Activated CD4-positive, alpha-beta T cell treated with anti-CD3 and anti-CD28 coated beads for 36 hours (primary cell): ENCODE measurements at regions of chr9 and their contacts with region 1.

Region 1: GRCh38 chr9:134067904-134068743 is at the start of gene BRD3:
- DNase-seq: peak; percentile 91
- ATAC-seq: peak; percentile 85
- H3K4me3 Mint-ChIP-seq: peak within 1 kb of the TSS; percentile 85
- H3K27ac Mint-ChIP-seq: peak within 1 kb of the TSS; percentile 84
- H3K4me1 Mint-ChIP-seq: peaks cover 28% of the 10 kb centered on the region
- H3K27me3 Mint-ChIP-seq: peaks cover 14% of the 10 kb centered on the region
- total RNA-seq, gene BRD3: 33.8 to 39.2 TPM

Region 2: GRCh38 chr9:133121198-133121939 is 946.8 kb before region 1 on chr9 and contains the start of gene RALGDS:
- CTCF ChIA-PET with region 1: no interaction called
- POLR2A ChIA-PET with region 1: no interaction called
- intact Hi-C with region 1: loop called in 1 of 2 experiments (anchors 1 kb)
- DNase-seq: peak; percentile 96
- ATAC-seq: peak; percentile 82
- H3K4me3 Mint-ChIP-seq: peak within 1 kb of the TSS; percentile 71
- H3K27ac Mint-ChIP-seq: peak within 1 kb of the TSS; percentile 80
- H3K4me1 Mint-ChIP-seq: peaks cover 58% of the 10 kb centered on the region
- H3K27me3 Mint-ChIP-seq: no peaks in the 10 kb centered on the region
- total RNA-seq, gene RALGDS: 65.1 to 78.6 TPM

Region 3: GRCh38 chr9:133459476-133460404 is 608.4 kb before region 1 on chr9 and contains the start of gene CACFD1:
- CTCF ChIA-PET with region 1: no interaction called
- POLR2A ChIA-PET with region 1: no interaction called
- intact Hi-C with region 1: loop called in 1 of 2 experiments (anchors 5 kb)
- DNase-seq: peak; percentile 96
- ATAC-seq: peak; percentile 88
- H3K4me3 Mint-ChIP-seq: peak within 1 kb of the TSS; percentile 74
- H3K27ac Mint-ChIP-seq: peak within 1 kb of the TSS; percentile 42
- H3K4me1 Mint-ChIP-seq: no peaks in the 10 kb centered on the region
- H3K27me3 Mint-ChIP-seq: no peaks in the 10 kb centered on the region
- total RNA-seq, gene CACFD1: 0.87 to 0.90 TPM

Region 4: GRCh38 chr9:134024828-134025605 is 43.1 kb before region 1 on chr9 and contains the start of gene BRD3OS:
- CTCF ChIA-PET with region 1: interaction called, 3 read pairs
- POLR2A ChIA-PET with region 1: interaction called, 5 read pairs
- intact Hi-C with region 1: loop called (anchors 1 kb)
- DNase-seq: peak; percentile 96
- ATAC-seq: peak; percentile 91
- H3K4me3 Mint-ChIP-seq: peak within 1 kb of the TSS; percentile 74
- H3K27ac Mint-ChIP-seq: no peak within 1 kb of the TSS
- H3K4me1 Mint-ChIP-seq: peaks cover 4% of the 10 kb centered on the region
- H3K27me3 Mint-ChIP-seq: no peaks in the 10 kb centered on the region
- total RNA-seq, gene BRD3OS: 15.1 to 18.0 TPM

Region 5: GRCh38 chr9:134325817-134326723 is 257.9 kb after region 1 on chr9 and contains the start of gene RXRA:
- CTCF ChIA-PET with region 1: no interaction called
- POLR2A ChIA-PET with region 1: no interaction called
- intact Hi-C with region 1: loop called (anchors 1 to 5 kb)
- DNase-seq: peak; percentile 68
- ATAC-seq: peak; percentile 48
- H3K4me3 Mint-ChIP-seq: peak within 1 kb of the TSS; percentile 55
- H3K27ac Mint-ChIP-seq: no peak within 1 kb of the TSS
- H3K4me1 Mint-ChIP-seq: peaks cover 3% of the 10 kb centered on the region
- H3K27me3 Mint-ChIP-seq: peaks cover 5% of the 10 kb centered on the region
- total RNA-seq, gene RXRA: 17.6 to 20.9 TPM

Region 6: DNA sequence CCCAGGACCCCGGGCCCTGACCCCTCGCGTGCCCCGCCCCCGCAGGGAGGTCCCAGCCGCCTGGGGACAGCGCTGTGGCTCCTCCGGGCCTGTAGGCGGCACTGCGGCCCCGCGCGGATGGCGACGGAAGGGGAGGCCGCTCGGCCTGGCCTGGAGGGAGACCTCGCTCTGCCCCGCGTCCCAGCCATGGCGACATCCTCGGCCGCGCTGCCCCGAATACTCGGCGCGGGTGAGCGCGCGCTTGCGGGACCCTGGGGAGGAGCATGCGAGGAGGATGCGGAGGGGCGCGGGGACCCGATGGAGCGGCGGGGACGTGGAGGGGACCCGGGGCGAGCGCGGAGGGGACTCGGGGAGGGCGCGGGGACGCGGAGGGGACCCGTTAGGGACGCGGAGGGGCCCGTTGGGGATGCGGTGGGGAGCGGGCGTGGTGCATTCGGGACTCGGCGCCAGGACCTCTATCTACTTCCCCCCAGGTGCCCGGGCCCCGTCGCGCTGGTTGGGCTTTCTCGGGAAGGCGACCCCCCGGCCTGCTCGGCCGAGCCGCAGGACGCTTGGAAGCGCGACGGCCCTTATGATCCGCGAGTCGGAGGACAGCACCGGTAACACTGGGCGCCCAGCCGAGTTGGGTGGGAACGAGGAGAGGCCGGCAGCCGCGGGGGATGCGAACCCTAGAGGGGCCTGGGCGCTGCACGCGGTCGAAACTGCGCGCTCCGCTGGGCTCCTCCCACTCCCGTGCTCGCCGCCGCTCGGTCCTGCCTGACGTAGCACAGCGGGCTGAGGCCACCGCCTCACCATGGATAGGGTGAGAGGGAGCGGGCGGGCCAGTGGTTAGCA is 1432.6 kb after region 1 on chr9 and contains the start of gene MRPS2:
- CTCF ChIA-PET with region 1: no interaction called
- POLR2A ChIA-PET with region 1: no interaction called
- intact Hi-C with region 1: loop called in 1 of 2 experiments (anchors 5 kb)
- DNase-seq: peak; percentile 91
- ATAC-seq: peak; percentile 93
- H3K4me3 Mint-ChIP-seq: peak within 1 kb of the TSS; percentile 85
- H3K27ac Mint-ChIP-seq: peak within 1 kb of the TSS; percentile 91
- H3K4me1 Mint-ChIP-seq: peaks cover 19% of the 10 kb centered on the region
- H3K27me3 Mint-ChIP-seq: no peaks in the 10 kb centered on the region
- total RNA-seq, gene MRPS2: 50.0 to 70.6 TPM